A673 (cell line): ENCODE measurements at regions of chr14 and their contacts with region 1.

Region 1: DNA sequence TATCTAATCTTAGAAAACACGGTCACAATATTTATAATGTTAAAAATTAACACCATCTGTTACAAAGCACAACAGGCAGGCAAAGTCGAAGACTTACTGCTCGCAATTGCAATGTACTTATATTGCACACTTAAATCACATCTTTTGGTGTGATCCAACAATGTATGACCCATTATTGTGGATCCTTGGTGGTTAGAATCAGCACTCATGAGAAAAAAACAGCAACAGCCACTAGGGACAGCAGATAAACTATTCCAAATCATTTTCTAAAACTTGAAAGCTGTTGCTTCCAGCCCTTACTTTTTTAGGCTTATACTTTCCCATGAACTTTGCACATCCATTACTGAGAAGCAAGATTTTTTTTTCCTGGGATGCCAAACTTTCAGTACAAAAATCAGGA is 20.4 kb downstream of the COX16 start:
- DNase-seq: no peak
- H3K4me3 ChIP-seq: no peak overlapping the region
- H3K27ac ChIP-seq: no peak overlapping the region
- H3K4me1 ChIP-seq: no peaks in the 10 kb centered on the region
- H3K27me3 ChIP-seq: no peaks in the 10 kb centered on the region
- CTCF ChIP-seq: no peak

Region 2: GRCh38 chr14:70366911-70367310 is 27.9 kb after region 1 on chr14:
- CTCF ChIA-PET with region 1: no interaction called
- POLR2A ChIA-PET with region 1: interaction called, 10 read pairs
- intact Hi-C with region 1: no loop called
- DNase-seq: no peak
- H3K4me3 ChIP-seq: no peak overlapping the region
- H3K27ac ChIP-seq: no peak overlapping the region
- H3K4me1 ChIP-seq: no peaks in the 10 kb centered on the region
- H3K27me3 ChIP-seq: no peaks in the 10 kb centered on the region
- CTCF ChIP-seq: no peak

Region 3: DNA sequence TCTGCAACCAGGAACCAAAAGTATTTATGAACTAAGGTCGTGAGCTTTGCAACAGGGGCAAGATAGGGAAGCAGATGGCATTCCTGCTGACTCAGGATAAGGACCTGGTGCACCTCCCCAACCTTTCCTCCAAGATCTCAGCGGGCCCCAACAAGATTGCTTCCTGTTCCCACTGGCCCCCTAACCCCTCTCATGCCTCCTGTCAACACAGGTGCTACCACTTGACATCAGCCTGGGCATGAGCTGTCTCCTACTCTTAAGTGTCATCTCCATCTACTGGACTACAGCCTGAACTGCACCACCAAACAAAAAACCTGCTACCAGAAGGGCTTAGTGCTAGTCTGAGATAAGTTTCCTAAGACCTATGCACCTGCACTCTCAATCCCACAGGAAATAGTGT is 228.7 kb after region 1 on chr14:
- CTCF ChIA-PET with region 1: no interaction called
- POLR2A ChIA-PET with region 1: no interaction called
- intact Hi-C with region 1: no loop called
- DNase-seq: peak; percentile 48
- H3K4me3 ChIP-seq: no peak overlapping the region
- H3K27ac ChIP-seq: no peak overlapping the region
- H3K4me1 ChIP-seq: no peaks in the 10 kb centered on the region
- H3K27me3 ChIP-seq: no peaks in the 10 kb centered on the region
- CTCF ChIP-seq: peak; percentile 64

Region 4: GRCh38 chr14:71078500-71078899 is 739.5 kb after region 1 on chr14:
- CTCF ChIA-PET with region 1: no interaction called
- POLR2A ChIA-PET with region 1: no interaction called
- intact Hi-C with region 1: no loop called
- DNase-seq: no peak
- H3K4me3 ChIP-seq: no peak overlapping the region
- H3K27ac ChIP-seq: no peak overlapping the region
- H3K4me1 ChIP-seq: no peaks in the 10 kb centered on the region
- H3K27me3 ChIP-seq: no peaks in the 10 kb centered on the region
- CTCF ChIP-seq: no peak